ENCODE measurements at regions of chrX and their contacts with region 1.

Region 1: GRCh38 chrX:53714580-53715345 is 28.2 kb upstream of the HUWE1 start:
- DNase-seq: peak; percentile 78
- H3K4me3 Mint-ChIP-seq: peak overlapping the region; percentile 93
- H3K27ac Mint-ChIP-seq: peak overlapping the region; percentile 100
- H3K4me1 Mint-ChIP-seq: peaks cover 36% of the 10 kb centered on the region
- H3K27me3 Mint-ChIP-seq: no peaks in the 10 kb centered on the region

Region 2: DNA sequence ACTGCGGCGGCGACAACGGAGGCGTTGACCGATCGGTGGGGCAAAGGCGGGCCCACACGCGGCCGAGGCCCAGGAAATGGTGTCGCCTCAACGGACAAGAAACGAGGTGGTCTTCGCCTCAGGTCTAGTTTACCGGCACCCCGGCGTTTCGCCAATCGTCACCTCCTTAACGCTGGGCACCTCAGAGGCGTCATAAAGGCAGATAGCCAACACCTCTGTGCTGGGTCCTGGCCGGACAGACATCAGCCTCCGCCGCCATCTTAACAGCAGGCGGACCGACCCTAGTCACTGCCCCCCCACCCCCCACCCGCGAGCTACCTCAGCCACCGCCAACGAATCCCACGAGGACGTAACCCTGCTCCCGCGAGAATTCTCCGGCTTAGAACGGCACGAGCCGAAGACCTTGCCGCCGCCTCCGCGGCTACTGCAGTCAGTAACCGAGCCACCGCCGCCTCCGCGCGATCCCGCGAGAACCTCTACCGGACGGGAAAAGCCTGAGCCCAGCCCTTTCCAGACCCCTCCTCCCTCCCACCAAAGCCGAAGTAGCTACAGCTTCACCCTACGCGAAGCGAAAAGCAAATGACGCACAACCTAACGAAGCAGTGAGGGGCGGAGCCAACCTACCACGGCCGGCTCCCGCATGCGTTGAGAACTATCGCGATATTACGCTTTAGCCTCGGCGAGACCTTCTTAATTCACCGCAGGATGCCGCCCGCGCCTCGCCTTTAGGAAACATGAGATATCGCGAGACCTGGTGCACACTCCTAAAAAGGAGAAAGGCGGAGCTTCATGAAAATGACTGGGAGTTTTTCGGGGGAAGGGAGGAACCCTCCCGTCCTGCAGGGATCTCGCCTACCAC is 31.0 kb before region 1 on chrX:
- CTCF ChIA-PET with region 1: interaction called, 11 read pairs
- POLR2A ChIA-PET with region 1: interaction called, 202 read pairs
- intact Hi-C with region 1: loop called (anchors 1 kb)
- DNase-seq: peak; percentile 95
- H3K4me3 Mint-ChIP-seq: peak overlapping the region; percentile 92
- H3K27ac Mint-ChIP-seq: peak overlapping the region; percentile 96
- H3K4me1 Mint-ChIP-seq: peaks cover 27% of the 10 kb centered on the region
- H3K27me3 Mint-ChIP-seq: no peaks in the 10 kb centered on the region

Region 3: GRCh38 chrX:53732797-53733196 is 18.0 kb after region 1 on chrX:
- CTCF ChIA-PET with region 1: interaction called, 7 read pairs
- POLR2A ChIA-PET with region 1: interaction called, 79 read pairs
- intact Hi-C with region 1: loop called (anchors 1 kb)
- DNase-seq: peak; percentile 56
- H3K4me3 Mint-ChIP-seq: peak overlapping the region; percentile 60
- H3K27ac Mint-ChIP-seq: peak overlapping the region; percentile 100
- H3K4me1 Mint-ChIP-seq: peaks cover 67% of the 10 kb centered on the region
- H3K27me3 Mint-ChIP-seq: no peaks in the 10 kb centered on the region

Region 4: GRCh38 chrX:53738370-53738906 is 23.7 kb after region 1 on chrX:
- CTCF ChIA-PET with region 1: interaction called, 7 read pairs
- POLR2A ChIA-PET with region 1: interaction called, 79 read pairs
- intact Hi-C with region 1: loop called (anchors 1 kb)
- DNase-seq: no peak
- H3K4me3 Mint-ChIP-seq: peak overlapping the region; percentile 13
- H3K27ac Mint-ChIP-seq: peak overlapping the region; percentile 87
- H3K4me1 Mint-ChIP-seq: peaks cover 66% of the 10 kb centered on the region
- H3K27me3 Mint-ChIP-seq: no peaks in the 10 kb centered on the region

Region 5: DNA sequence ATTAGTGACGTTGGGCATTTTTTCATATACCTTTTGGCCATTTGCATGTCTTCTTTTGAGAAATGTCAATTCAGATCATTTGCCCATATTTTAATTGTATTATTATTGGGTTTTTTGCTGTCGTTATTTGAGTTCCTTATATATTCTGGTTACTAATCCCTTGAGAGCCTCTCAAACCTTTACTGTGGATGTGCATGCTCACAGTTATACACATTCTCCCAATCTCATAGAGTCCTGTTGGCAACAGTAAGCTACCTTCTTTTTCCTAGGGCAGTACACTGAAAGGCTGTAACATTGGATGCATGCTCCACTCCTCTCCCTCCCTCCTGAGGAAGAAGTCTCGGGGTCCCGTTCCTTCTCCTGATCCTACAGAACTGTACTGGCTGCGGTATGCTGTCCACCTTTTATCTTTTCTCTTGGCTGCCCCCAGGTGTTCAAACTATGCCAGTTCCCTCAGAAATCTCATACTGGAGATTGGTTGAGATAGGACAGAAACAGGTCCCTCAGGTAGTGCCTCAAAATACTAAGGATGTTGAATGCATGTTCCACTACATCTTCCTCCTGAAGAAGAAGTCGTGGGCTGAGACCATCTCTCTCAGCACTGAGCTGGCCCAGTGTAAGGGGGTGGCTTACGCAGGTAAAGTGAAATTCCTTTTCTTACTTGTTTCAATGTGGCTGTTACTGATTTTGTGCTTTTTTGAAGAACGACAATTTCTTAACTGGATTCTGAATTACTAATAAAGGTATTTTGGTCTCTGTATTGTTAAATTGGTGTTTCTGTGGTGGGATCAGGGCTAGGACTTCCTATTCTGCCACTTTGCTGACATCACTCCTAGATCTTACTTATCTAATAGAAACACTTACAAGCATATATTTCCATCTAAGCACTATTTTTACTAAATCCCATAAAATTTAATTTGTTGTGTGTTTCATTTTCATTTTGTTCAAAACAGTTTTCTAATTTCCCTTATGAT is 117.2 kb after region 1 on chrX:
- CTCF ChIA-PET with region 1: no interaction called
- POLR2A ChIA-PET with region 1: interaction called, 6 read pairs
- intact Hi-C with region 1: loop called (anchors 1 kb)
- DNase-seq: peak; percentile 58
- H3K4me3 Mint-ChIP-seq: peak overlapping the region; percentile 61
- H3K27ac Mint-ChIP-seq: peak overlapping the region; percentile 81
- H3K4me1 Mint-ChIP-seq: peaks cover 34% of the 10 kb centered on the region
- H3K27me3 Mint-ChIP-seq: no peaks in the 10 kb centered on the region

Region 6: DNA sequence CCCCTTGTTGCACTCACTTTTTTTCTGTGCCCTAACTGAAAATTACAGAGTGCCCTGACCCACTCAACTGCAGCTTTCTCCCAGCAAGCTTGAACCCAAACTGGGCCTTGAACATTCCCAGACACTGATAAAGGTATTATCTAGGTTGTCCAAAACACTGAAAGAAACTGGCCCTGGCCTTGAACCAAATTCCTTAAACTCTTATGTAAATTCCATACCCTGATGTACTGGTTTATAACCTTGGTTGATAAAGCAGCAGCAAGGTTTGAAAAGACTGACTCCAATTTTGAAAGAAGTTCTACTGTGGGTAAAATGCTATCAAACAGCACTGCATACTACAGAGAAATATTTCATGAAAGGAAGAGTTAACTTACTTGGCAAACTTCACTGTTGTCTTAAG is 203.9 kb after region 1 on chrX:
- CTCF ChIA-PET with region 1: no interaction called
- POLR2A ChIA-PET with region 1: no interaction called
- intact Hi-C with region 1: no loop called
- DNase-seq: no peak
- H3K4me3 Mint-ChIP-seq: no peak overlapping the region
- H3K27ac Mint-ChIP-seq: no peak overlapping the region
- H3K4me1 Mint-ChIP-seq: no peaks in the 10 kb centered on the region
- H3K27me3 Mint-ChIP-seq: peaks cover 3% of the 10 kb centered on the region

Measured in activated CD4-positive, alpha-beta memory T cell treated with anti-CD3 and anti-CD28 coated beads for 36 hours (primary cell).